CD4-positive, alpha-beta T cell (primary cell): ENCODE measurements at regions of chr5 and their contacts with region 1.

Region 1: DNA sequence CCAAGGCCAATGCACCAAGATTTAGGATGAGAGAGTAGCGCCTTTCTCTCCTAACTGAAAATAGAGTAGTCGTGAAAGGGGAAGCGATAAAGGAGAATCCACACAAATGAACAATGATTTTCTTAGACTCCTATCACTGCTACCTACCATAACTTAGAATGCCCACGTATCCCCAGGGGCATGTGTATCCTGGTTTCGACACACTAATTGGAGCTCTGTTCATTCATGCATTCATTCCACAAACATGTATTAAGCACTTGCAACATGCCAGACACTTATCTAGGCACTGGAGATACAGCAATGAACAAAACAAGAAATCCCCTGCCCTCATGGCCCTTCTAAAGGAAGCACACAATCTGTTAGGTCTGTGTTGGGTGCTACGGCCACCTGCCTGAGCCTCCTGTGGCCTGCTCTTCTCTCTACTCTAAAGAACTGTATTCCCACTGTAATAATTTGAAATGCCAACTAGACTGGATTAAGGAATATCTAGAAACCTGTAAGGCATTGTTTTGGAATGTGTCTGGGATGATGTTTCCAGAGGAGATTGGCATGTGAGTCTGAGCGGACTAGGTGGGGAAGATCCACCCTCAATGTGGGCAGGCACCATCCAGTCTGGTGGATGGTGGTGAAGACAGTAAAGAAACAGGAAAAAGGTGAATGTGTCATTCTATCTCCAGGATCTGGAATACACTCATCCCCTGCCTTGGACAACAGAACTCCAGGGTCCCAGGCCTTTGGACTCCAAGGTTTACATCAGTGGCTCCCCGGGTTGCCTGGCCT is 39.9 kb downstream of the ARL15 start:
- DNase-seq: no peak
- ATAC-seq: no peak
- H3K4me3 ChIP-seq: no peak overlapping the region
- H3K4me3 Mint-ChIP-seq: no peak overlapping the region
- H3K27ac ChIP-seq: no peak overlapping the region
- H3K27ac Mint-ChIP-seq: no peak overlapping the region
- H3K4me1 ChIP-seq: no peaks in the 10 kb centered on the region
- H3K4me1 Mint-ChIP-seq: peaks cover 23% of the 10 kb centered on the region
- H3K27me3 ChIP-seq: no peaks in the 10 kb centered on the region
- H3K27me3 Mint-ChIP-seq: no peaks in the 10 kb centered on the region
- CTCF ChIP-seq: no peak

Region 2: DNA sequence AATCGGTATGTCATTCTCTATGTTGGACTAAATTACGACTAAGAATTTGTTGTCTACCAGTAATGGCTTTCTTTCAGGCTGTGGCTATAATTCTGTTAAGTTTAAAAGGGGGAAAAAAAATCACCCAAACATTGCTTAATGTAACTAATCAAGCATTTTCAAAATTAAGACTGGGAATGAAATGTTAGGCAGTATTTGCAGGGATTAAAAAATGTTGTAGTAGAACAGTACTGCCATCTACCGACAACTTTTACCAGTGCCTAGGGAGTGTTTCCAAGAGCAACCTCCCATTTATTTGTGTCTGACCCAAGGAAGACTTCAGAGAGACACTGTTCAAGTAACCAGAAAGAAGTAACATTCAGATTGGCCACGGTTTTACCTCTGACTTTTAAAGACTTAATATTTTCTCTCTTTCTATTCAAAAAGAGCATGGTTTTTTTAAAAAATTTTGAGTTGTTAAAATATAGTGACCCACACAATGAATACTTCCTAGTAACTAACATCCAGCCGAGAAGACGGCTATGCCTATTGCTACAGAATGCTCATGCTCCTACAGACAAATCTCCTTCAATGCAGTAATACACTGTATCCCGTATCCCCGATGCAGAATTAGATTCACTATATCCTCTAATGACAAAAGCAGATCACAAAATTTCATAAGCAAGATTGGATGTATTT is 52.5 kb before region 1 on chr5:
- CTCF ChIA-PET with region 1: no interaction called
- POLR2A ChIA-PET with region 1: no interaction called
- intact Hi-C with region 1: no loop called
- DNase-seq: peak in 4 of 14 experiments; percentile 10 to 55 (median 50)
- ATAC-seq: no peak
- H3K4me3 ChIP-seq: no peak overlapping the region
- H3K4me3 Mint-ChIP-seq: no peak overlapping the region
- H3K27ac ChIP-seq: no peak overlapping the region
- H3K27ac Mint-ChIP-seq: no peak overlapping the region
- H3K4me1 ChIP-seq: no peaks in the 10 kb centered on the region
- H3K4me1 Mint-ChIP-seq: peaks cover 16% of the 10 kb centered on the region
- H3K27me3 ChIP-seq: no peaks in the 10 kb centered on the region
- H3K27me3 Mint-ChIP-seq: no peaks in the 10 kb centered on the region
- CTCF ChIP-seq: peak; percentile 69

Region 3: DNA sequence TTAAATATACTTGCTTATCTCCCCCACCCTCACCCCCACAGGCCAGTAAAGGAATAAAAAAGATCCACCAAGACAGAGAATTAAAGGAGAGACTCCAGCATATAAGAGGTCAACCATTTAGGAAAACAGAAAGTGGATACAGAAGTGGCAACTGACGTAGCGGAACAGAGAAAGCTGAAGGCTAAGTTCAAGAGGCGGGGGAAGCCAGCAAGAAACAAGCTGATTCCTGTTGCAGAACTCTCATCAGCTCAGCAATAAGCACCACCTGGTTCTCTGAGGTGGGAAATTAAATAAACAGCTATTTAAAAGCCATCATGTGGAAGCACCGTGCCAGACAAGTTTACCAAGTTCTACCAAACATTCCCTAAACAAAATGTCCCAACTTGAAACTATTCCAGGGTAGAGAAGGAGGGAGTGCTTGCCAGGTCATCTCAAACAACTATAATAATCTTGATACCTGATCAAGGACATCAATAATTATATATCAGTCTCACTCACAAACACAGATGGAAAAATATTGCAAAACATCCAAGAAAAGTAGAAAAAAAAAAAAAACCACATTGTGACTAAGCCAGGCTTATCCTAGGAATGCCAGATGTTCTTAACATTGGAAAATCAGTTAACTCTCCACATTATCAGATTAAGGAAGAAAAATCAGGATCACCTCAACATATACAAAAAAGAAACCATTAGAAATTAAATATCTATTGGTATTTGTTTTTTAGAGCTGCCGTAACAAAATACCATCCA is 47.2 kb after region 1 on chr5:
- CTCF ChIA-PET with region 1: no interaction called
- POLR2A ChIA-PET with region 1: no interaction called
- intact Hi-C with region 1: loop called in 1 of 2 experiments (anchors 1 kb)
- DNase-seq: no peak
- ATAC-seq: no peak
- H3K4me3 ChIP-seq: no peak overlapping the region
- H3K4me3 Mint-ChIP-seq: no peak overlapping the region
- H3K27ac ChIP-seq: no peak overlapping the region
- H3K27ac Mint-ChIP-seq: no peak overlapping the region
- H3K4me1 ChIP-seq: no peaks in the 10 kb centered on the region
- H3K4me1 Mint-ChIP-seq: no peaks in the 10 kb centered on the region
- H3K27me3 ChIP-seq: peaks cover 0 to 6% of the 10 kb centered on the region in 2 experiments
- H3K27me3 Mint-ChIP-seq: peaks cover 57% of the 10 kb centered on the region
- CTCF ChIP-seq: no peak